Psoas muscle (tissue), 8 donors: ENCODE measurements at regions of chr11 and their contacts with region 1.

Region 1: GRCh38 chr11:62427630-62428233 is 8.9 kb downstream of the SCGB1A1 start:
- DNase-seq: no peak
- ATAC-seq: no peak
- H3K4me3 ChIP-seq: no peak overlapping the region
- H3K27ac ChIP-seq: no peak overlapping the region
- H3K4me1 ChIP-seq: no peaks in the 10 kb centered on the region
- H3K27me3 ChIP-seq: no peaks in the 10 kb centered on the region
- CTCF ChIP-seq: no peak

Region 2: GRCh38 chr11:62370743-62371440 is 56.8 kb before region 1 on chr11:
- intact Hi-C with region 1: loop called in 1 of 2 experiments (anchors 5 kb)
- DNase-seq: no peak
- ATAC-seq: no peak
- H3K4me3 ChIP-seq: no peak overlapping the region
- H3K27ac ChIP-seq: no peak overlapping the region
- H3K4me1 ChIP-seq: no peaks in the 10 kb centered on the region
- H3K27me3 ChIP-seq: no peaks in the 10 kb centered on the region
- CTCF ChIP-seq: no peak